Ascending aorta (tissue), 2 donors: ENCODE measurements at regions of chr16 and their contacts with region 1.

Region 1: DNA sequence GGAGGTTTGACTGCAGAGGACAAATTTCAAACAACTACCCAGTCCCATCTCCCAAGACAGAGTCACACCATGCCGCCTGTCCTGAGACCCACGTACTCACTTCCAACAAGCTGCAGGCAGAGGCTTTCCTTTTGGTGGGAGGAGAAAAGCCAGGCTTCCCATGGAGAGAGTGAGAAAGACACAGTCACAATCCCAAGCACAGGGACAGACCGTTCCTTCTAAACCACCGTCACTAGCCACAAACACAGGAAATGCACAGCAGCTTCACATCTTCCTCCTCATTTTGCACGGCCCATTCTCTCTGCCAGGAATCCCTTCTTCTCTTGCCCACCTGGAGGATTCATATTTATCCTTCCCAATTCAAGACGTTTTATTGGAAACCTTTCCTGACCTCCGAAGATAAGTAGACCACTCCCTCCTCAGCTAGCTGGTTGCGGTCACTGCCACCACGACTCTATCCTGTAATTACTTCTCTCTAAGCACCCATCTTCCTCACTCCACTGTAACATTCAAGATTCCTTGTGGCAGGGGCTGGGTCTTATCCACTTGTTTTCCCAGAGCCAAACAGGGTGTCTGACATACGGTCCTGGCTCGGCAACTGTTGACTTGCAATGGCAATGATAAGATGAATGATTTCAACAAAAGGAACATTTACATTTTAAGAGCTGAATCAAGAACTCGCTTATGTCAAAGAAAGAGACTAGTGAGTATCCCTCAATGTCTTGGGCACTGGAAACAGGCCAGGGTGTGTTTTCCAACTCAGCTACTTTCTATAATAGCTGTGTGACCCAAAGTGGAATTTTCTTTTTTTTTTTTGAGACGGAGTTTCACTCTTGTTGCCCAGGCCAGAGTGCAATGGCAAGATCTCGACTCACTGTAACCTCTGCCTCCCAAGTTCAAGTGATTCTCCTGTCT is 87.6 kb downstream of the XYLT1 start:
- DNase-seq: no peak
- H3K4me3 ChIP-seq: no peak overlapping the region
- H3K27ac ChIP-seq: no peak overlapping the region
- H3K4me1 ChIP-seq: peaks cover 0 to 19% of the 10 kb centered on the region in 2 donors
- H3K27me3 ChIP-seq: no peaks in the 10 kb centered on the region
- CTCF ChIP-seq: no peak

Region 2: GRCh38 chr16:17397499-17397891 is 14.3 kb after region 1 on chr16:
- intact Hi-C with region 1: loop called (anchors 2 kb)
- DNase-seq: no peak
- H3K4me3 ChIP-seq: no peak overlapping the region
- H3K27ac ChIP-seq: peak overlapping the region; percentile 36 to 42
- H3K4me1 ChIP-seq: peaks cover 4 to 21% of the 10 kb centered on the region in 2 donors
- H3K27me3 ChIP-seq: no peaks in the 10 kb centered on the region
- CTCF ChIP-seq: no peak